ENCODE measurements at regions of chr5 and their contacts with region 1.

Region 1: GRCh38 chr5:34533582-34534522 is 122.3 kb upstream of the RAI14 start:
- DNase-seq: peak; percentile 60
- H3K4me3 Mint-ChIP-seq: no peak overlapping the region
- H3K27ac Mint-ChIP-seq: peak overlapping the region; percentile 87
- H3K4me1 Mint-ChIP-seq: peaks cover 40% of the 10 kb centered on the region
- H3K27me3 Mint-ChIP-seq: peaks cover 5% of the 10 kb centered on the region

Region 2: DNA sequence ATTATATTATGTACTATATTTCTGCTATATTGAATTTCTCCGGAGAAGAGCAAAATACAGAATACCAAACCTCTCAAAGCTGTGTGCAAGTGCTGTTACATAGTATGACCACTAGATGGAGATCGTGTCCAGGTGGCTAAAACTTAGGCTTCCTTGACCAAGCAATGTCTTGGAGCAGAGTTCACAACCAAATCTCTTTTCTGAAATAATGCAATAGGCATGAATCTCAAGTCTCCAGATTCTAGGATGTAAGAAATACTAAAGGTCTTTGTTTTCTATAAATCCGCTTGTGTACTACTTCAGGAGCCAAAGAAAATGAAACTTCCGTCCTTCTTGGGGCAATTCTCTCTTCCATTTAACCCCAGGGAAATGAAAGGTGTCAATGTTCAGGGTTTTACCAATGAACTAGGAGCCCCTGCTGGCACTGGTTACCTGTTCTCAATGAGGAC is 59.3 kb before region 1 on chr5:
- CTCF ChIA-PET with region 1: interaction called, 9 read pairs
- intact Hi-C with region 1: loop called (anchors 1 kb)
- DNase-seq: peak; percentile 34
- H3K4me3 Mint-ChIP-seq: no peak overlapping the region
- H3K27ac Mint-ChIP-seq: no peak overlapping the region
- H3K4me1 Mint-ChIP-seq: no peaks in the 10 kb centered on the region
- H3K27me3 Mint-ChIP-seq: peaks cover 11% of the 10 kb centered on the region

Region 3: GRCh38 chr5:34499001-34499734 is 34.7 kb before region 1 on chr5:
- CTCF ChIA-PET with region 1: interaction called, 4 read pairs
- intact Hi-C with region 1: loop called (anchors 1 kb)
- DNase-seq: peak; percentile 63
- H3K4me3 Mint-ChIP-seq: no peak overlapping the region
- H3K27ac Mint-ChIP-seq: peak overlapping the region; percentile 74
- H3K4me1 Mint-ChIP-seq: peaks cover 13% of the 10 kb centered on the region
- H3K27me3 Mint-ChIP-seq: peaks cover 18% of the 10 kb centered on the region

Region 4: GRCh38 chr5:34598177-34598794 is 64.4 kb after region 1 on chr5:
- CTCF ChIA-PET with region 1: no interaction called
- intact Hi-C with region 1: loop called (anchors 2 kb)
- DNase-seq: peak; percentile 32
- H3K4me3 Mint-ChIP-seq: no peak overlapping the region
- H3K27ac Mint-ChIP-seq: no peak overlapping the region
- H3K4me1 Mint-ChIP-seq: peaks cover 12% of the 10 kb centered on the region
- H3K27me3 Mint-ChIP-seq: peaks cover 9% of the 10 kb centered on the region

Region 5: DNA sequence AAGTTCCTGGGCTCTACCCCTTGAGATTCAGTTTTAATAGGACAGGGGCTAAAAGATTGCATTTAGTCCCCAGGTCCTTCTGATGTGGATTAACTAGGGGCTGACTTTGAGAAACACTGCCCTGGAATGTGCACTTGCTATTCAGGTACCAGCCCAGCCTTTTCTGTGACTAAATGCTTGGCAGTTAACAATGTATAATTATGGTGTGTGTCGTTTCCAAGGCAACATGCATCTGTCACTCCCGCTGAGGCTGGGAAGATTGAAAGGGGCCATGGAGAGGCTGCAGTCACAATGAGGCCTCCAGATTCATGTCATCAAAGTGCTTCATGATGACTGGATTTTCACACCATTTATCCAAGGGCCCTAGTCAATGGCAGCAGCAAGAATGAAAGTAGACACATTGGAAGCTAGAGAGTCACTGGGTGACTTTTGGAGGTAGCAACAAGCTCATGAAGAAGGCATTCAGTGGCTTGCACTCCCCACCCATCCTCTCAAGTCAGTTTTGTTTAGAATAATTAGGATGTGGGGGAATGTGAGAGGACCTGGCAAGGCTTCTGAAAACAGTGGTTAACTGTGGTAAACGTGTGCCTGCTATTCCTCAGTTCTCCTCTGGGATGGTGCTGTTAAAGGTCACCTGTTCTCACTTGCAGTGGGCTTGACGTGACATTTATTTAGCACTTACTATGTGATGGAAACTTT is 150.6 kb after region 1 on chr5:
- CTCF ChIA-PET with region 1: no interaction called
- intact Hi-C with region 1: loop called (anchors 1 kb)
- DNase-seq: peak; percentile 54
- H3K4me3 Mint-ChIP-seq: no peak overlapping the region
- H3K27ac Mint-ChIP-seq: no peak overlapping the region
- H3K4me1 Mint-ChIP-seq: peaks cover 14% of the 10 kb centered on the region
- H3K27me3 Mint-ChIP-seq: peaks cover 5% of the 10 kb centered on the region

Region 6: DNA sequence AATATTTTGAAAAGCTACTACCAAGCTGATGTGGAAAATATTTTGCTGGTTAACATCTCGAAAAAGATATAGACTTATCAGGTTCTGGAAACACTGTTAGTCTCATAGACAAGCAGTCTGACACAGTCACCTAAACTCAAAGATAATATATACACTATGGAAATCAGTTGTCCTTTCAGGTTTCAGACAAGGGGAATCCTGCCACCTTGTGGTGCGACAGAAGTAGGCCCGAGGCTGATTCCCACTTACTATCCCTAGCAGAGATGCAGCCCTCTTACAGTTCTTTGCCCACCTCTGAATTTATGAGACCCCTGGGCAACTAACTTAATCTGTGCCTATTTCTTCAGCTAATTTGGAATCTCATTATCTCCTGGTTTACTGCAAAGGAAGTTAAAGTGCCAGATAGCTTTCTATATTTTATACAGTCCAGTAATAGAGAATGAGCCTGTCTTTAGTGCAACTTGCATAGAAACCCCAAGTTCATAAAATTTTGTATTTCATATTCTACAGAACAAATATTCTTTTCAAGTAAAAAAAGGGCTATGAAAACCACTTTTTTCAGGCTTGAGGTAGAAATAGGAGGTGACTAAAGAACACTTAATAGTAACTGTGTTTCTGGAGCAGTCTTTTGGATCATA is 364.5 kb after region 1 on chr5:
- CTCF ChIA-PET with region 1: interaction called, 4 read pairs
- intact Hi-C with region 1: loop called (anchors 5 kb)
- DNase-seq: peak; percentile 77
- H3K4me3 Mint-ChIP-seq: no peak overlapping the region
- H3K27ac Mint-ChIP-seq: no peak overlapping the region
- H3K4me1 Mint-ChIP-seq: no peaks in the 10 kb centered on the region
- H3K27me3 Mint-ChIP-seq: no peaks in the 10 kb centered on the region

Region 7: GRCh38 chr5:35319333-35320002 is 785.6 kb after region 1 on chr5:
- CTCF ChIA-PET with region 1: no interaction called
- intact Hi-C with region 1: loop called (anchors 1 kb)
- DNase-seq: peak; percentile 94
- H3K4me3 Mint-ChIP-seq: no peak overlapping the region
- H3K27ac Mint-ChIP-seq: peak overlapping the region; percentile 24
- H3K4me1 Mint-ChIP-seq: peaks cover 14% of the 10 kb centered on the region
- H3K27me3 Mint-ChIP-seq: peaks cover 24% of the 10 kb centered on the region

Measured in activated naive CD4-positive, alpha-beta T cell treated with anti-CD3 and anti-CD28 coated beads for 36 hours (primary cell).